Posterior vena cava (tissue), 2 donors: ENCODE measurements at regions of chr7 and their contacts with region 1.

Region 1: GRCh38 chr7:7542251-7542835 is 6.7 kb upstream of the COL28A1 start:
- DNase-seq: no peak

Region 2: GRCh38 chr7:7103343-7104313 is 438.7 kb before region 1 on chr7:
- intact Hi-C with region 1: loop called in 1 of 2 experiments (anchors 10 kb)
- DNase-seq: no peak